Activated T-helper 2 cell treated with anti-CD3 and anti-CD28 coated beads, Interferon-gamma antibody, Interleukin-2, Interleukin-4, amounts not matched to agents 10 μg/mL and 5 μg/mL and 100 μg/mL, durations not matched to agents 14 hours and 24 hours and 36 hours (primary cell): ENCODE measurements at regions of chr21 and their contacts with region 1.

Region 1: DNA sequence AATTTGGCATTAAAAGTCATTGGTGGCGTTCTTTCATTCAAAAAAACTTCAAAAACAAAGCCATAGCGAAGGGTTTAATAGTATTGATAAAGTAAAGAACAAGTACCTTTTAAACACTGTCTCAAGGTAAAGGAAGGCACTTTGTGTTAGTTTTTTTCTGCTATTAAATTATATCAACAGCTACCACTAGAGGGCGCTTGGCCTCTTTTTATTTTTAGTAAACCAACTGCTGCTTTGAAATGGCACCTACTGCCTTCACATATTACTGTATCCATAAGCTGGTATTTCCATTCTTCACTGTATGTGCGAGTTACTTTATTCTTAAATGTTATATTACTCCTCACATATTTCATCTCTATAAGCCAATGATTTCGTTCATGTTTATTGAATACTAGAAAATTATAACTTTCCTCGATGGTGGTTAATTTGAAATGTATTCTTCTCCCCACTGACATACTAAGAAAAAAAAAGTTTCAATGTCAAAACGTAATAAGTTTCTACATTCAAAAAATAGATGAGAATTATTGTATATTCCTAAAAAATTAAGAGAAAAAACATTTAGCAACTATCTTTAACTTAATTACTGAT is 125.7 kb upstream of the CXADR start:
- DNase-seq: peak; percentile 10
- H3K4me3 Mint-ChIP-seq: no peak overlapping the region
- H3K27ac Mint-ChIP-seq: no peak overlapping the region
- H3K4me1 Mint-ChIP-seq: no peaks in the 10 kb centered on the region
- H3K27me3 Mint-ChIP-seq: no peaks in the 10 kb centered on the region

Region 2: GRCh38 chr21:15508554-15508953 is 1878.6 kb before region 1 on chr21:
- intact Hi-C with region 1: no loop called
- DNase-seq: no peak
- H3K4me3 Mint-ChIP-seq: no peak overlapping the region
- H3K27ac Mint-ChIP-seq: no peak overlapping the region
- H3K4me1 Mint-ChIP-seq: peaks cover under 1% of the 10 kb centered on the region
- H3K27me3 Mint-ChIP-seq: no peaks in the 10 kb centered on the region

Region 3: DNA sequence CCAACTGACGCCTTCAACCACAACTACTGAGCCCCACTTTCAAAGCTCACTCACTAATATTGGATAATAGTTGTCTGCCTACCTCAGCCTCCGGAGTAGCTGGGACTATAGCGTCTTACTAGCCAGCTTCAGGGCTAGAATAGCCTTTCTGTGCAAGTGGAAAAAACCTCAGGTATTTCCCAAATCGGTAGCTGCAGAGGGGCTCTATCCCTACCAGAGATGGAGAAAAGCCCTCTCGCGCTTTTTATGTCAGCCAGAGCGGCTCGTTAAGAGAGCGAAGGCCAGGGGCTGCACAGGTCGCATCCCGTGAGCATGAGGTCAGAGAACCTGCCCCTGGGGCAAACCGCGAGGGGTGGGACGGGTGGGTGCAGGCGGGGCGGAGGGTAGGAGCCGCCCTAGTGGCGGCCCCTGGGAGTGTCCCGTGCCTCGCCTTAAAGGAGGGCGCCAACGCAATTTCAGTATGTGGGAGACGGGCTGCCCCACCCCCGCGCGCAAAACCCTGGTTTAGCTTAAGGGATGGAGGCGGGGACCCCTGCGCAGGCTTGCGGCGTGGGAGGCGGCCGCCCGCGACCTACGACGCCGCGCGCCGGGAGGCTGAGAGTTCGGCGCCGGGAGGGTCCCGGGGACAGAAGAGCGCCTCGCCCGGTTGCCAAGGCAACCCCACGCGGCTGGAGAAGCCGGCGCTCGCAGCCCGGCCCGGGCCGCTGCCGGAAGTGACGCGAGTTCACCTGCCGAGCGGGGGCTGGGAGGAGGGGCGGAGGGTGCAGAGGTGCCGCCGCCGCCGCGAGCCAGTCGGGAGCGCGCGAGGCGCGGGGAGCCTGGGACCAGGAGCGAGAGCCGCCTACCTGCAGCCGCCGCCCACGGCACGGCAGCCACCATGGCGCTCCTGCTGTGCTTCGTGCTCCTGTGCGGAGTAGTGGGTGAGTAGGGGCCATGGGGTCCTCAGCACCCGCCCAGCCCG is 125.4 kb after region 1 on chr21 and contains the start of gene CXADR:
- intact Hi-C with region 1: loop called (anchors 10 kb)
- DNase-seq: peak; percentile 72
- H3K4me3 Mint-ChIP-seq: peak within 1 kb of the TSS; percentile 83
- H3K27ac Mint-ChIP-seq: no peak within 1 kb of the TSS
- H3K4me1 Mint-ChIP-seq: peaks cover 15% of the 10 kb centered on the region
- H3K27me3 Mint-ChIP-seq: peaks cover 52% of the 10 kb centered on the region
- total RNA-seq, gene CXADR: 0.39 and 0.64 TPM in 2 replicates

Region 4: DNA sequence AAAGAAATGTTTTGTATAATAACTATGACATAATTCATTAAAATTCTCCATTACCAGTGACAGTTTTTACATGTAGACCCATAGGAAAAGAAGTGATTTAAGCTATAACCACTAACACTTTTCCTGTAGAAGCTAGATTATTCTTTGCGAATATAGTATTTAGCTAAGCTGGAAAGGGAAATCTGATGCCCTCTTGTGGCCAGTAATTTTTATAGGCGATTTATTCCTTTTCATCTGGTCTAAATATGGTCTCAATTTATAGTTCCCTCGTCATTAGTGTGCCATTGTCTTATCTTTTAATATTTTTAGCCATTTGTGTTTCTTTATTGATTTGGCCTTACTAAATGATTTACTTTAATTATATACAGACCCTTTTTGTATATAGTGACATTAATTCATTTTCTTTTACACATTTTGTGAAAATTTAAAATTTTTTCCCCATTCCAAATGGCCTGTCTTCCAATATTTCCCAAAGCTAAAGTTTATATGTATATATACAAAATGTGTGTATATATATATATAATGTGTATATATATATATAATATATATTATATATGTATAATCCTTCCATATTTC is 198.8 kb after region 1 on chr21:
- intact Hi-C with region 1: loop called (anchors 1 kb)
- DNase-seq: no peak
- H3K4me3 Mint-ChIP-seq: no peak overlapping the region
- H3K27ac Mint-ChIP-seq: no peak overlapping the region
- H3K4me1 Mint-ChIP-seq: no peaks in the 10 kb centered on the region
- H3K27me3 Mint-ChIP-seq: peaks cover 2% of the 10 kb centered on the region

Region 5: GRCh38 chr21:17903029-17903806 is 516.1 kb after region 1 on chr21:
- intact Hi-C with region 1: loop called (anchors 5 kb)
- DNase-seq: no peak
- H3K4me3 Mint-ChIP-seq: no peak overlapping the region
- H3K27ac Mint-ChIP-seq: no peak overlapping the region
- H3K4me1 Mint-ChIP-seq: peaks cover 6% of the 10 kb centered on the region
- H3K27me3 Mint-ChIP-seq: no peaks in the 10 kb centered on the region